ENCODE measurements at regions of chr5 and their contacts with region 1.

Region 1: DNA sequence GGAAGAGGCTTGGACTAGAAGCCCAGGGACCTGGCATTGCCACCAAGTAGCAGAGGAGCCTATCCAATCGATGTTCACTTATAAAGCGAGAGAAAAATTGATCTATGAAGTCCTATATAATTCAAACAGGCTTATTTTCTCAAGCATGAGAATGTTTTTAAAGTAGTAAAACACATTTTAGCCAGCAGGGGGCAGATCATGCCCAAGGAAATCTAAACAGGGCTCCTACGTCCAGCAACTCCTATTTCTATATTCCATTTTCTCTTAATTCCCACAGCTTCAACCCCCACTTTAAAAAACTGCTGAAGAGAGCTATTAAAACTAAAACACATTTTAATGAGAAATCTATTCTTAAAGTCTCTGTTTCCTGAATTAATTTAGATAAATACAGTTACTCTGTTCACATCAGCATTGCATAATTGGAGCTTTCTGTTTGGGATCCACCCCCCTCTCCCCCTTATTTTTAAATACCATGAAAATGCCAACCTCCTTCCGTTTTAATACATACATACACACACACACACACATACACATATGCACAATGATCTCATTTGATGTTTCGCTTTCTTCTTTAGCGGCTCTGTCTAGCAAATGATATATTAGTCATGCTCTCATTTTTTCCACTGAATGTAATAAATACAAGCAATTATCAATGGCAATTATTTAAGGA is 144.9 kb downstream of the MYO10 start:
- DNase-seq: peak; percentile 73
- H3K4me3 Mint-ChIP-seq: no peak overlapping the region
- H3K27ac Mint-ChIP-seq: no peak overlapping the region
- H3K4me1 Mint-ChIP-seq: peaks cover 2% of the 10 kb centered on the region
- H3K27me3 Mint-ChIP-seq: peaks cover 2% of the 10 kb centered on the region

Region 2: GRCh38 chr5:15092801-15093200 is 1698.4 kb before region 1 on chr5:
- intact Hi-C with region 1: no loop called
- DNase-seq: no peak
- H3K4me3 Mint-ChIP-seq: no peak overlapping the region
- H3K27ac Mint-ChIP-seq: no peak overlapping the region
- H3K4me1 Mint-ChIP-seq: no peaks in the 10 kb centered on the region
- H3K27me3 Mint-ChIP-seq: no peaks in the 10 kb centered on the region

Region 3: GRCh38 chr5:16192311-16192710 is 598.9 kb before region 1 on chr5:
- intact Hi-C with region 1: no loop called
- DNase-seq: no peak
- H3K4me3 Mint-ChIP-seq: no peak overlapping the region
- H3K27ac Mint-ChIP-seq: no peak overlapping the region
- H3K4me1 Mint-ChIP-seq: no peaks in the 10 kb centered on the region
- H3K27me3 Mint-ChIP-seq: no peaks in the 10 kb centered on the region

Region 4: DNA sequence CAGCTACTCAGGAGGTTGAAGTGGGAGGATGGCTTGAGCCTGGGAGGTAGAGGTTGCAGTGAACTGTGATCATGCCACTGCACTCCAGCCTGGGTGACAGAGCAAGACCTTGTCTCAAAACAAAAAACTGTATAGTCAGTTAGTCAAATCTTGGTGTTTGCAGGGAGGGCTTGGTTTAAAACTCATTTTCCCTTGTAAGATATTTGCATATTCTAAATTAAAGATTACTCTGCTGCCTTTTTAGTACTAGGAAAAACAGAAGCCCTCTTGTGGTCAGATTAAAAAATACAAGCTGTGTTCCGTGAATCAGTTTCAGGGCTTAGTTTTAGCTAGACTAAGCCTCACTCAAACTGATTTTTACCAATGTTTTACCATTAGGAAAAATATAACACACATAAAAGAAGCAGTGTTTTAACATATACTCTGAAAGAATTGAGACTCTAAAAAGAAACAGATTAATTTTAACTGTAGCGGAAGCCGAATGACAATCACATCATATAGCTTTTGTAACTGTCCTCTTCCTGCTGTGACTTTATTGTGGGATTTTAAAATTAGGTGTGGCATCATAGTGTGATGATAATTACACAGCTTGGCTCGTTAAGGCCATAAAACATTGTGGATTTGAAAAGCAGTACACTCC is 341.4 kb after region 1 on chr5:
- intact Hi-C with region 1: loop called (anchors 1 kb)
- DNase-seq: no peak
- H3K4me3 Mint-ChIP-seq: no peak overlapping the region
- H3K27ac Mint-ChIP-seq: no peak overlapping the region
- H3K4me1 Mint-ChIP-seq: peaks cover 8% of the 10 kb centered on the region
- H3K27me3 Mint-ChIP-seq: peaks cover 4% of the 10 kb centered on the region